Right ventricle myocardium superior (tissue), 1 donor: ENCODE measurements at regions of chr6 and their contacts with region 1.

Region 1: GRCh38 chr6:31739639-31740396 is at the start of gene MSH5:
- DNase-seq: peak; percentile 99
- ATAC-seq: peak; percentile 95
- total RNA-seq, gene MSH5: 1.8 TPM

Region 2: DNA sequence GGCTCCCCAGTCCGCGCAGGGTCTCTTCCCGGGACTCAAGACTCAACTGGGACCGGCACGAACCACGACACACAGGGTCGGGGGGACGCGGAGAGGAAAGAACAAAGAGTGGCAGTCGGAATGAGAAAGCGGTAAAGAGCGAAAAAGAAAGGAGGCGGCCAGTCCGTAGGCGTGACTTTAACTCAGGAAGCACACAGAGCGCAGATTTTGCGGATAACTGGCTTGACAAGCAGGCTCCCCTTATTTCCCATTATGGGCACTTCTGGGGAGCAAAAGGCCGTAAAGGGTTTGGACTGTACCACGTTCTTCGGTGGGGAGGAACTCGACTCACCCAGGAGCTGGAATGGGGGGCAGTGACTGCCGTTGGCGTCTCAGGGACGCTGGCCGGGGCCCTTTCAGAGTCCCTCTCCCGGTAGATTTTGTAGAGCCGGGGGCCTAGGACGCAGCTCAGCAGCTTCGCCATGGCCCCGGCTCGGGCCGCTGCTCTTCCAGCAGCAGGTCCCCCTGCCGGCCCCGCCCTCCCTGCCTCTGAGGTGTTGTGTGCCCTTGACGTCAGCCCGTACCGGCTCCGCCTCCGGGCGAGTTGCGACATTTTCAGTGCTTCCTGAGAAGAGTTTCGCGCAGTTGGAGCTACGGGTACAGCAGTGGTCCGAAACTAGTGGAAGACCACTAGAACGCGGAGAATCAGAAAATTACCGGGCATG is 36.8 kb before region 1 on chr6 and contains the start of gene ABHD16A:
- intact Hi-C with region 1: loop called (anchors 5 kb)
- DNase-seq: peak; percentile 100
- ATAC-seq: peak; percentile 99
- total RNA-seq, gene ABHD16A: 27.9 TPM

Region 3: GRCh38 chr6:31752739-31753319 is 13.0 kb after region 1 on chr6:
- intact Hi-C with region 1: no loop called
- DNase-seq: no peak
- ATAC-seq: no peak

Region 4: DNA sequence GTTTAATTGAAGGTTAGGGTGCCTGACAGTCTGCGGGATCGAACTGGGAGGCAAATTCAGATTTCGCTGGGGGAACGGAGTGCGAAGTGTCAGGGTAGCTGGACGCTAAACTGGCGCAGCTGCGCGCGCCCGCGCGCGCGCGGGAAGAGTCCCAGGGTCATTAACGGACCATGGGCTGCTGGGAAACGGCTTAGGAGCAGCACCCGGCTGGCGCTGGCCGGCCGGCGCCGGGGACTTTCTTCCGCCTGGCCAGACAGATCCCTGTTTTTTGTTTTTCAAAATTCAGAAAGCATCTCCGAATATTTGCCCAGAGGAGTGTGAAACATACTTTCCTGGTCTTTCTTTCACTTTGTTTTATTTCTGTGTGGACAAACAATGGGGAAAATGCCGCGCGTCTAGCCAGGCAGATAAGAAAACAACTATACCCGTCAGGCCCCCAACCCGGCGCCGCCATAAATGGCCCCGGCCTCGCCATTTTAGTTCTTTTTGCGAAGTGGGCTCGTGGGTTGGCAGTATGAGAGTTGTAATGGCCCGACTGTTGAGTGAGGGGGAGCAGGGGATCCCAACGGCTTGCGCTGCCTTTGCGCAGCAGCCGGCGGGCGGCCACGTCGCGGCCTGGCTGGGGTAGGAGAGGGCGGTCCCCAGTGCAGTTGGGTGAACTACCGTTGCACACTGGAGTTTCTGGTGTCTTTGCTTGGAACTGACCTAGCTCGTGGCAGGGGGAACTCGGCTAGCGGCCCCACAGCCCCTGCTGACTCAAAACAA is 94.8 kb after region 1 on chr6:
- intact Hi-C with region 1: loop called (anchors 10 kb)
- DNase-seq: peak; percentile 93
- ATAC-seq: peak; percentile 92